Naive thymus-derived CD4-positive, alpha-beta T cell (primary cell): ENCODE measurements at regions of chr3 and their contacts with region 1.

Region 1: GRCh38 chr3:48439820-48440589 is at the starts of genes CCDC51 and TMA7:
- DNase-seq: peak; percentile 90 to 98 (median 96)
- ATAC-seq: peak; percentile 97
- H3K4me3 ChIP-seq: peak within 1 kb of the TSS; percentile 78
- H3K4me3 Mint-ChIP-seq: peak within 1 kb of the TSS; percentile 86 to 100 (median 94)
- H3K27ac ChIP-seq: peak within 1 kb of the TSS; percentile 93
- H3K27ac Mint-ChIP-seq: peak within 1 kb of the TSS; percentile 92 to 100 (median 98)
- H3K4me1 ChIP-seq: peaks cover 18 to 19% of the 10 kb centered on the region in 2 donors
- H3K4me1 Mint-ChIP-seq: peaks cover 16 to 50% (median 34%) of the 10 kb centered on the region in 7 donors
- H3K27me3 ChIP-seq: no peaks in the 10 kb centered on the region
- H3K27me3 Mint-ChIP-seq: no peaks in the 10 kb centered on the region
- total RNA-seq, gene CCDC51: 3.6 to 16.5 (median 5.0) TPM
- total RNA-seq, gene TMA7: 193 to 278 (median 236) TPM

Region 2: DNA sequence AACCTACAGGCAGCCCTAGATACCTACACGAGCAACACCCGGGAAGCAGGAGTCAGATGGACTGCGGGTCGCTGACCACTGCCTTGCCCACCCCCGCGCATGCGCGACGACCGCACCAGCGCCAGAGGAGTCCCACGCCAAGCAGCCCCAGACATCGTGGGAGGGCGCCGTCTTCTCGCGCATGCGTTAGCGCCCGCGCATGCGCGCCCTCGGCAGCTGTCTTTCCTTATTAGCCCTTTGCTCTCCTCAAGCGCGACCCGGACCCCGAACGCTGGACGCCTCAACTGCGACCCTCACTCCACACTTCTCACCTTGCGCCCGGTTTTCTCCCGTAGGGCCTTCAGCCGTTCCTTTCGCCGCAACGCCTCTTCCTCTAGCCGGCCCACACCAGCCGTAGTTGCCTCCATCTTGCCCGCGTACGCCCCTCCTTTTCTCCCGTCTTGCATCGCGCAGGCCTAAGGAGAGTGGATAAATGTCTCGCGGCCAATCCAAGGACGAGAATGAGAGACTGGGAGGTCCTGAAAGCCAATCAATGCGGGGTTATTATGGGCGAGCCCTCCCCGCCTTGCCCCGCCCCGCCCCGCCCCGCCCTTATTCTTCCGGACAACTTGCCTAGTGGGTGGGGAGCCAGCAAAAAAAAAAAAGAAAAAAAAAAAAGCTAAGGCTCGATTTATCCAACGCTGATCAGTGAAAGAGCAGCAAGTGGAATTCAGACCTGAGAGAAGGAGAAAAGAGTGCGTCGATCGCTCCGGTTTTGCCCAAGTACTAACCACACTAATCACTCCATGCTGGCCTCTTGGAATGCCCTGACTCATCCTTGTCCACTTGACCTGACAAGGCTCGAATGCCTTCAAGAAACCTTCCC is 1463.4 kb before region 1 on chr3 and contains the start of gene CCDC12:
- CTCF ChIA-PET with region 1: no interaction called
- POLR2A ChIA-PET with region 1: no interaction called
- intact Hi-C with region 1: loop called in 1 of 2 experiments (anchors 10 kb)
- DNase-seq: peak; percentile 79 to 98 (median 96)
- ATAC-seq: peak; percentile 87
- H3K4me3 ChIP-seq: peak within 1 kb of the TSS; percentile 98
- H3K4me3 Mint-ChIP-seq: peak within 1 kb of the TSS; percentile 95 to 100 (median 99)
- H3K27ac ChIP-seq: peak within 1 kb of the TSS; percentile 90
- H3K27ac Mint-ChIP-seq: peak within 1 kb of the TSS; percentile 94 to 99 (median 98)
- H3K4me1 ChIP-seq: peaks cover 46 to 53% of the 10 kb centered on the region in 2 donors
- H3K4me1 Mint-ChIP-seq: peaks cover 44 to 82% (median 63%) of the 10 kb centered on the region in 7 donors
- H3K27me3 ChIP-seq: no peaks in the 10 kb centered on the region
- H3K27me3 Mint-ChIP-seq: no peaks in the 10 kb centered on the region
- total RNA-seq, gene CCDC12: 51.6 to 61.5 (median 56.9) TPM

Region 3: GRCh38 chr3:48240711-48241491 is 199.1 kb before region 1 on chr3 and contains the start of gene ZNF589:
- CTCF ChIA-PET with region 1: interaction called, 6 read pairs
- POLR2A ChIA-PET with region 1: interaction called, 6 read pairs
- intact Hi-C with region 1: loop called in 1 of 2 experiments (anchors 1 kb)
- DNase-seq: peak; percentile 87 to 96 (median 92)
- ATAC-seq: peak; percentile 99
- H3K4me3 ChIP-seq: peak within 1 kb of the TSS; percentile 92
- H3K4me3 Mint-ChIP-seq: peak within 1 kb of the TSS; percentile 82 to 94 (median 92)
- H3K27ac ChIP-seq: peak within 1 kb of the TSS; percentile 79
- H3K27ac Mint-ChIP-seq: peak within 1 kb of the TSS; percentile 88 to 96 (median 93)
- H3K4me1 ChIP-seq: peaks cover 7 to 14% of the 10 kb centered on the region in 2 donors
- H3K4me1 Mint-ChIP-seq: peaks cover 5 to 36% (median 25%) of the 10 kb centered on the region in 7 donors
- H3K27me3 ChIP-seq: no peaks in the 10 kb centered on the region
- H3K27me3 Mint-ChIP-seq: no peaks in the 10 kb centered on the region
- total RNA-seq, gene ZNF589: 37.7 to 64.0 (median 40.2) TPM

Region 4: GRCh38 chr3:48408823-48409281 is 31.2 kb before region 1 on chr3:
- CTCF ChIA-PET with region 1: interaction called, 13 read pairs
- POLR2A ChIA-PET with region 1: no interaction called
- intact Hi-C with region 1: loop called in 1 of 2 experiments (anchors 2 kb)
- DNase-seq: no peak
- ATAC-seq: no peak
- H3K4me3 ChIP-seq: no peak overlapping the region
- H3K4me3 Mint-ChIP-seq: no peak overlapping the region
- H3K27ac ChIP-seq: no peak overlapping the region
- H3K27ac Mint-ChIP-seq: no peak overlapping the region
- H3K4me1 ChIP-seq: no peaks in the 10 kb centered on the region
- H3K4me1 Mint-ChIP-seq: no peaks in the 10 kb centered on the region
- H3K27me3 ChIP-seq: no peaks in the 10 kb centered on the region
- H3K27me3 Mint-ChIP-seq: no peaks in the 10 kb centered on the region

Region 5: GRCh38 chr3:48478596-48479555 is 38.9 kb after region 1 on chr3:
- CTCF ChIA-PET with region 1: interaction called, 22 read pairs
- POLR2A ChIA-PET with region 1: interaction called, 22 read pairs
- intact Hi-C with region 1: loop called in 1 of 2 experiments (anchors 1 kb)
- DNase-seq: peak; percentile 34 to 88 (median 84)
- ATAC-seq: peak; percentile 88
- H3K4me3 ChIP-seq: peak overlapping the region; percentile 50
- H3K4me3 Mint-ChIP-seq: peak overlapping the region; percentile 72 to 100 (median 84)
- H3K27ac ChIP-seq: peak overlapping the region; percentile 57
- H3K27ac Mint-ChIP-seq: peak overlapping the region; percentile 86 to 99 (median 98)
- H3K4me1 ChIP-seq: peaks cover 25 to 33% of the 10 kb centered on the region in 2 donors
- H3K4me1 Mint-ChIP-seq: peaks cover 27 to 55% (median 46%) of the 10 kb centered on the region in 7 donors
- H3K27me3 ChIP-seq: no peaks in the 10 kb centered on the region
- H3K27me3 Mint-ChIP-seq: no peaks in the 10 kb centered on the region

Region 6: GRCh38 chr3:48609088-48610005 is 169.3 kb after region 1 on chr3 and contains the start of gene UQCRC1:
- CTCF ChIA-PET with region 1: interaction called, 4 read pairs
- POLR2A ChIA-PET with region 1: no interaction called
- intact Hi-C with region 1: loop called in 1 of 2 experiments (anchors 2 kb)
- DNase-seq: peak; percentile 85 to 94 (median 93)
- ATAC-seq: peak; percentile 99
- H3K4me3 ChIP-seq: peak within 1 kb of the TSS; percentile 96
- H3K4me3 Mint-ChIP-seq: peak within 1 kb of the TSS; percentile 86 to 100 (median 98)
- H3K27ac ChIP-seq: peak within 1 kb of the TSS; percentile 84
- H3K27ac Mint-ChIP-seq: peak within 1 kb of the TSS; percentile 91 to 99 (median 97)
- H3K4me1 ChIP-seq: peaks cover 10 to 12% of the 10 kb centered on the region in 2 donors
- H3K4me1 Mint-ChIP-seq: peaks cover 12 to 31% (median 19%) of the 10 kb centered on the region in 7 donors
- H3K27me3 ChIP-seq: no peaks in the 10 kb centered on the region
- H3K27me3 Mint-ChIP-seq: no peaks in the 10 kb centered on the region
- total RNA-seq, gene UQCRC1: 77.3 to 156 (median 91.7) TPM